Naive thymus-derived CD4-positive, alpha-beta T cell (primary cell): ENCODE measurements at regions of chr18 and their contacts with region 1.

Region 1: DNA sequence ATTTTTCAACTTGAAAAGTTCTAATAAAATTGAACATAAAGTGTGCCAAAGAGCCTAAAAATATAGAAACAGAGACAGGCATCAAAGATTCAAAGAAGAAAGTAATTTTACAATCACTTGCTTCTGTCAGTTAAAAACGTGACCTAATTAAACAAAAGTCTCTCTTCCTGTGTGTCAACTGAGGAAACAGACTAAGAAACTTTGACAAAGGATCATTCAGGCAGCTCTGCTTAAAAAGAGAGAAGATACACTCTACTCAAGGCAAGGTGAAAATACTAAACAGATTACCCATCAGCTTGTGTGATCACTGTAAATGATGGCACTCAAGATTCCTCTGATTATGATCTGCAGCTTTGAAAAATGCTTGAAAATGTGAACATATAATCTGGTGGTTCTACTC is 47.8 kb downstream of the DYM start:
- DNase-seq: peak in 3 of 9 donors; percentile 15 to 31 (median 21)
- ATAC-seq: no peak
- H3K4me3 ChIP-seq: no peak overlapping the region
- H3K4me3 Mint-ChIP-seq: peak overlapping the region in 8 of 10 donors; percentile 1 to 61 (median 38)
- H3K27ac ChIP-seq: no peak overlapping the region
- H3K27ac Mint-ChIP-seq: peak overlapping the region; percentile 13 to 83 (median 77)
- H3K4me1 ChIP-seq: peaks cover 0 to 16% of the 10 kb centered on the region in 2 donors
- H3K4me1 Mint-ChIP-seq: peaks cover 13 to 51% (median 47%) of the 10 kb centered on the region in 7 donors
- H3K27me3 ChIP-seq: no peaks in the 10 kb centered on the region
- H3K27me3 Mint-ChIP-seq: no peaks in the 10 kb centered on the region

Region 2: GRCh38 chr18:49459404-49460171 is 46.9 kb after region 1 on chr18:
- CTCF ChIA-PET with region 1: no interaction called
- POLR2A ChIA-PET with region 1: interaction called, 4 read pairs
- intact Hi-C with region 1: loop called in 1 of 2 experiments (anchors 5 kb)
- DNase-seq: peak in 3 of 9 donors; percentile 4 to 17 (median 5)
- ATAC-seq: peak; percentile 19
- H3K4me3 ChIP-seq: peak overlapping the region; percentile 86
- H3K4me3 Mint-ChIP-seq: peak overlapping the region; percentile 88 to 95 (median 94)
- H3K27ac ChIP-seq: peak overlapping the region; percentile 80
- H3K27ac Mint-ChIP-seq: peak overlapping the region; percentile 67 to 89 (median 83)
- H3K4me1 ChIP-seq: peaks cover 14 to 26% of the 10 kb centered on the region in 2 donors
- H3K4me1 Mint-ChIP-seq: peaks cover 34 to 62% (median 47%) of the 10 kb centered on the region in 7 donors
- H3K27me3 ChIP-seq: no peaks in the 10 kb centered on the region
- H3K27me3 Mint-ChIP-seq: peaks cover 0 to 6% (median 0%) of the 10 kb centered on the region in 5 donors